H1 (cell line): ENCODE measurements at regions of chr11 and their contacts with region 1.

Region 1: GRCh38 chr11:72091005-72091691 is 10.5 kb downstream of the LRRC51 start:
- DNase-seq: peak; percentile 66 to 89
- H3K4me3 ChIP-seq: no peak overlapping the region
- H3K27ac ChIP-seq: no peak overlapping the region
- H3K4me1 ChIP-seq: peaks cover 0 to 3% (median 1%) of the 10 kb centered on the region in 4 experiments; a peak in 2 of 7 replicates
- H3K27me3 ChIP-seq: no peaks in the 10 kb centered on the region
- CTCF ChIP-seq: peak; percentile 93 to 96 (median 95)
- EP300 ChIP-seq: no peak
- POLR2A ChIP-seq: no peak; a peak in 1 of 3 replicates
- RAD21 ChIP-seq: peak; percentile 87 to 91

Region 2: GRCh38 chr11:72004936-72005500 is 86.1 kb before region 1 on chr11:
- CTCF ChIA-PET with region 1: interaction called, 12 read pairs
- POLR2A ChIA-PET with region 1: interaction called, 4 read pairs
- DNase-seq: no peak
- H3K4me3 ChIP-seq: no peak overlapping the region
- H3K27ac ChIP-seq: no peak overlapping the region
- H3K4me1 ChIP-seq: no peaks in the 10 kb centered on the region
- H3K27me3 ChIP-seq: no peaks in the 10 kb centered on the region
- CTCF ChIP-seq: no peak
- EP300 ChIP-seq: no peak
- POLR2A ChIP-seq: no peak
- RAD21 ChIP-seq: no peak

Region 3: DNA sequence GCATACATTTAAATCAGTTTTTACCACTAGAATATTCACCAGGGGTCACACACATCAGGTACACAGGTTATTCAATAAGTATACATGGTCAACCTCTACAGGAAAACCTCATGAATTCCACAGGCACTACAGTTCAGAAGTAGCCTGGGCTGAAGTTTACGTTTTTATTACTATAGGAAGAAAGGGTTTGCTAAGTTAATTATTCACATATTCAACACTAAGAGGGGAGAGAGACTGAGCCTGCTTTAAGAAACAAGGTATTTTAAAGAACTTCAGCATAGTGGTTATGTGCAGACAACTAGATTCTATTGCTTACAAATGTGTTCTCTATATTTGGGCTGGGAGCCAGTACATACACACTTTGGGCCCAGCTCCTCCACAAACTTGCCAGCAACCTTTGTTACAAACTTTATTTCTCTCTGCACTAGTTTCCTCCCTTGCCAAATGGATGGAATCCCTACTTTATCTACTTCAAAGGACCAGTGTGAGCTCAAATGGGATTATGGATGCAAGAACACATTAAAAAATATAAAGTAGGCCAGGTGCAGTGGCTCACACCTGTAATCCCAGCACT is 60.6 kb before region 1 on chr11:
- CTCF ChIA-PET with region 1: interaction called, 423 read pairs
- POLR2A ChIA-PET with region 1: interaction called, 40 read pairs
- DNase-seq: no peak
- H3K4me3 ChIP-seq: no peak overlapping the region
- H3K27ac ChIP-seq: no peak overlapping the region
- H3K4me1 ChIP-seq: no peaks in the 10 kb centered on the region
- H3K27me3 ChIP-seq: no peaks in the 10 kb centered on the region
- CTCF ChIP-seq: no peak
- EP300 ChIP-seq: no peak
- POLR2A ChIP-seq: no peak
- RAD21 ChIP-seq: no peak

Region 4: DNA sequence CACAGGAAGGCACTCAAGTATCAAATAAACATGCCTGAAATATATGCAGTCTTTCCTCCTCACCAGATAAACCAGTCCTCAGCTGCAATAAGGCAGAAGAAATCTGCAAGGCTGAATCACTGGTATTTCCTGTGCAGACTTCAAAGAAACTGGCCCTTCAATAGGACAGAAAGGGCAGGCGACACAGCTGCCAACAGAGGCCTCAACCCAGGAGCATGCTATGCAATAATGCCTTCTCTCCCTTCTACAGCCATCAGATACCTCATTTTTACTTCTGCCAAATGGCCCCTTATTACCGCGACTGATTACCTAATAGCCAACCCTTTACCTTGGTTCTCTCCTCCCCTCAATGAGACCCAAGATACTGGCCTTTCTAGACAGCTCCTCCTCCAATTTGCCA is 18.8 kb before region 1 on chr11:
- CTCF ChIA-PET with region 1: interaction called, 33 read pairs
- POLR2A ChIA-PET with region 1: interaction called, 6 read pairs
- DNase-seq: no peak
- H3K4me3 ChIP-seq: no peak overlapping the region
- H3K27ac ChIP-seq: no peak overlapping the region
- H3K4me1 ChIP-seq: peaks cover 0 to 11% (median 2%) of the 10 kb centered on the region in 4 experiments; a peak in 3 of 7 replicates
- H3K27me3 ChIP-seq: no peaks in the 10 kb centered on the region
- CTCF ChIP-seq: no peak
- EP300 ChIP-seq: no peak
- POLR2A ChIP-seq: no peak
- RAD21 ChIP-seq: no peak

Region 5: DNA sequence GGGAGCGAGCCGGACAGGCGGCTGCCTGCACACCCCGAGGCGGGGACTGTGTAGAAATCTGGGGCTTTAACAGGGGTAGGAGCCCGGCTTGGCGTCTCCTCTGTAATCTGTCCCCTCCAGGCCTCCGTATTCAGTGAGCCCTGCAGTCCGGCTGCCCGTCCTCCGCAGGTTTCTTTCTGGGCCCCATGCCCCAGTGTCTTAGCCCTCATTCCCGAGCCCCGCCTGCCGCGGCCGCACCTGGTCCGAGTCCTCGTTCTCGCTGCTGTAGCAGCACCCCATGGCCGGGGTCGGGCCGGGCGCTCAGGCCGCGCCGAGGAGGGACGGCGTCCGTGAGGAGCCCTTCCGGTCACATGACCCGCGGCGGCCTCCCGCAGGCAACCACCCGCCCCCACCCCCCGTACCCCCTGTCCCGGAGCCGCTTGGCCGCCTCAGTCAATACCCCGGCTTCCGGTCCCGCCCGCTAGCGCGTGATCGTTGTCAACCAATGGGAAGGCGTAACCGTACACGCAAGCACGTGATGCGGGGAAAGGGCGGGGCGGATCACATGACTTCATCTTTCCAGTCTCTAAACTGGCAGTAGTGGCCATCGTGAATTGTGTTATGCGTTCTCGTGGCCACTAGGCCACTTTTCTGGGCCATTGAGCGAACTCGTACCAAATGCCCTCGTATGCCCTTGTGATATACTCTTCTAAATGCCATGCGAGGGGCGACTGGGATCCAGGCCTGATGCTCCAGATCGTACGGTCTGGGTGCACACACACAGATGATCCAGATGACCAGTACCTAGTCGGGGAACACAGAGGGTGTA is 12.0 kb after region 1 on chr11 and contains the start of gene LAMTOR1:
- CTCF ChIA-PET with region 1: interaction called, 44 read pairs
- POLR2A ChIA-PET with region 1: interaction called, 144 read pairs
- DNase-seq: peak; percentile 97 to 98
- H3K4me3 ChIP-seq: peak within 1 kb of the TSS; percentile 95 to 98 (median 97)
- H3K27ac ChIP-seq: peak within 1 kb of the TSS; percentile 86
- H3K4me1 ChIP-seq: peaks cover 3 to 14% (median 5%) of the 10 kb centered on the region in 4 experiments; a peak in 6 of 7 replicates
- H3K27me3 ChIP-seq: no peaks in the 10 kb centered on the region
- CTCF ChIP-seq: peak; percentile 16 to 60 (median 36); a peak in 3 of 4 replicates
- EP300 ChIP-seq: peak in 1 of 2 experiments; percentile 39; a peak in 1 of 3 replicates
- POLR2A ChIP-seq: peak; percentile 88 to 96
- RAD21 ChIP-seq: peak; percentile 21 to 37; a peak in 2 of 4 replicates
- total RNA-seq, gene LAMTOR1: 81.0 and 82.1 TPM in 2 replicates

Region 6: DNA sequence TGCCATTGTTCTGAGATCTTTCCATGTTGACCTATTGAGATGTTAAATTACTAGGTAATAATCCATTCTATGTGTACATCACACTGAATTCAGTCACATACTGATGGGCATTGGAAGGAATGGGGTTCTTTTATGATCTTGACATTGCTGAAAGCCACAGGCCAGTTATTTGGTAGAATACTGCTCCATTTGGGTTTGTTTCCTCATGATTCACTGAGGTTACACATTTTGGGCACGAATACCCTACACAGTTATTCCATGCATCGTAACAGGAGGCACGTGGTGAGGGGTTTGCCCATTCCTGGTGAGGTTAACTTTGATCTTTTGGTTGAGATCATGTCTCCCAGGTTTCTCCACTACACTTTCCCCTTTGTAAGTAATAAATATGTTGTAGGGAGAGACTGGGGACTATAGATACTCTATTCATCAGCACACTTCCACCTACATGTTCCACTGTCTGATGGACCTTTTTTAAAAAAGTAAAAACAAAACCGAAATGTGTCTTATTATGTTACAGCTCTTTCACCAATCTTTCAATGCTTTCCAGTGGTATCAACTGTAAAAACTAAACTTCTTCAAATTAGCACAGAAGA is 88.8 kb after region 1 on chr11:
- CTCF ChIA-PET with region 1: interaction called, 22 read pairs
- POLR2A ChIA-PET with region 1: interaction called, 4 read pairs
- DNase-seq: no peak
- H3K4me3 ChIP-seq: no peak overlapping the region
- H3K27ac ChIP-seq: no peak overlapping the region
- H3K4me1 ChIP-seq: no peaks in the 10 kb centered on the region
- H3K27me3 ChIP-seq: no peaks in the 10 kb centered on the region
- CTCF ChIP-seq: no peak
- EP300 ChIP-seq: no peak
- POLR2A ChIP-seq: no peak
- RAD21 ChIP-seq: no peak

Region 7: DNA sequence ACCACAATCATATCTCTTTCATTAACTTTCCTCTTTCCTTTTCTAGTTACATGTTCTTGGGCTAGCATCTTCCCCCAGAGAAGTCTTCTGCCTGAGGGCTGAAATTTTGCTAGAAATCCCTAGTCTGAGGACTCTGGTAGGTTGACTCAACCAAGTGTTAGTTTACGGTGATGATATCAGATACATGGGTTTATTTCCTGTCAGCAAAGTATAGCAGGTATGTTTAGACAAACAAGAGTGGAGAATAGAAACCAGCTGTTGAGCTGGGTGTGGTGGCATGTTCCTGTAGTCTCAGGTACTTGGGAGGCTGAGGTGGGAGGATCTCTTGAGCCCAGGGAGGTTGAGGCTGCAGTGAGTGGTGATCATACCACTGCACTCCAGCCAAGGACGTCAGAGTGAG is 112.0 kb after region 1 on chr11:
- CTCF ChIA-PET with region 1: no interaction called
- POLR2A ChIA-PET with region 1: no interaction called
- DNase-seq: no peak
- H3K4me3 ChIP-seq: no peak overlapping the region
- H3K27ac ChIP-seq: no peak overlapping the region
- H3K4me1 ChIP-seq: no peaks in the 10 kb centered on the region
- H3K27me3 ChIP-seq: no peaks in the 10 kb centered on the region
- CTCF ChIP-seq: no peak
- EP300 ChIP-seq: no peak
- POLR2A ChIP-seq: no peak
- RAD21 ChIP-seq: no peak

Region 8: GRCh38 chr11:72274435-72274834 is 183.3 kb after region 1 on chr11:
- CTCF ChIA-PET with region 1: no interaction called
- POLR2A ChIA-PET with region 1: no interaction called
- DNase-seq: no peak
- H3K4me3 ChIP-seq: no peak overlapping the region
- H3K27ac ChIP-seq: no peak overlapping the region
- H3K4me1 ChIP-seq: no peaks in the 10 kb centered on the region
- H3K27me3 ChIP-seq: no peaks in the 10 kb centered on the region
- CTCF ChIP-seq: no peak
- EP300 ChIP-seq: no peak
- POLR2A ChIP-seq: no peak
- RAD21 ChIP-seq: no peak